Activated CD4-positive, alpha-beta memory T cell treated with anti-CD3 and anti-CD28 coated beads for 36 hours (primary cell): ENCODE measurements at regions of chr13 and their contacts with region 1.

Region 1: GRCh38 chr13:78137404-78138142 is 218.9 kb upstream of the EDNRB start:
- DNase-seq: peak; percentile 12
- H3K4me3 Mint-ChIP-seq: no peak overlapping the region
- H3K27ac Mint-ChIP-seq: no peak overlapping the region
- H3K4me1 Mint-ChIP-seq: peaks cover 3% of the 10 kb centered on the region
- H3K27me3 Mint-ChIP-seq: no peaks in the 10 kb centered on the region

Region 2: DNA sequence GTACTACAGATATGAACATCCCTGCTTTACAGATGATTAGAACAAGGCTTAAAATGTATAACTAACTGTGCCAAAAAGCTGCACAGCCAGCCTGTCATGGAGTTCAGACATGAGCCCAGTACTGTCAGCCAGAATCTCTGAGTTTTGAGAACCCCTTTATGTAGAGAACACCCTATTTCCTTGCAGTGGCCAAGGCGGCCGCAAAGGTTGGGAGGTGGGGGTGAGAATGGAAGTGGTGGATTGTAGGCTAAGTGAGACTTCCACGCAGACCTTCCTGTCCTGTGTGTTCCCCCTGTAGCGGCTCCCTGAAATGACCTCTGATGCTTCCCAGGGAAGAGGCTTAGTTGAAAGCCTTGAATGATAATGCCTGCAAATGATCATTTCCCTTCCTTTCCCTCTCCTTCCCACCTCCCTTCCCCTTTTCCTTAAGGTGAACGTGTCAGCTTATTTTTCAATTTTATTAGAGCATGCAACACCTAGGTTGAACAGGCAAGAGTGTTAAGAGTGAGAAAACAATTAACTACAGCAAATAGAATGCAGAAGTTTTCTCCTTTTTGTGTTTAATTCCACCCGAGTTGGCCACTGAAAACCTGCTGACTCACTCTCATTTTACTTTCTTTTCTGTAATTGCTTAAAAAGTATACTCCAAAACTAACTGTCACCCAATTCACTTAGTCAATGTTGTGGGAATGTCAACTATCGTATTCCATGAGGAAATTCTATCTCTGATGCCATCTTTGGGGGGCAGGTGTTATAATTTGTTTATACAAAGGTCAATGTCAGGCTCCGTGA is 51.9 kb before region 1 on chr13:
- CTCF ChIA-PET with region 1: no interaction called
- POLR2A ChIA-PET with region 1: no interaction called
- intact Hi-C with region 1: no loop called
- DNase-seq: no peak
- H3K4me3 Mint-ChIP-seq: no peak overlapping the region
- H3K27ac Mint-ChIP-seq: no peak overlapping the region
- H3K4me1 Mint-ChIP-seq: no peaks in the 10 kb centered on the region
- H3K27me3 Mint-ChIP-seq: peaks cover 9% of the 10 kb centered on the region

Region 3: GRCh38 chr13:78147905-78148304 is 10.3 kb after region 1 on chr13:
- CTCF ChIA-PET with region 1: interaction called, 16 read pairs
- POLR2A ChIA-PET with region 1: no interaction called
- intact Hi-C with region 1: no loop called
- DNase-seq: no peak
- H3K4me3 Mint-ChIP-seq: no peak overlapping the region
- H3K27ac Mint-ChIP-seq: no peak overlapping the region
- H3K4me1 Mint-ChIP-seq: no peaks in the 10 kb centered on the region
- H3K27me3 Mint-ChIP-seq: peaks cover 2% of the 10 kb centered on the region

Region 4: DNA sequence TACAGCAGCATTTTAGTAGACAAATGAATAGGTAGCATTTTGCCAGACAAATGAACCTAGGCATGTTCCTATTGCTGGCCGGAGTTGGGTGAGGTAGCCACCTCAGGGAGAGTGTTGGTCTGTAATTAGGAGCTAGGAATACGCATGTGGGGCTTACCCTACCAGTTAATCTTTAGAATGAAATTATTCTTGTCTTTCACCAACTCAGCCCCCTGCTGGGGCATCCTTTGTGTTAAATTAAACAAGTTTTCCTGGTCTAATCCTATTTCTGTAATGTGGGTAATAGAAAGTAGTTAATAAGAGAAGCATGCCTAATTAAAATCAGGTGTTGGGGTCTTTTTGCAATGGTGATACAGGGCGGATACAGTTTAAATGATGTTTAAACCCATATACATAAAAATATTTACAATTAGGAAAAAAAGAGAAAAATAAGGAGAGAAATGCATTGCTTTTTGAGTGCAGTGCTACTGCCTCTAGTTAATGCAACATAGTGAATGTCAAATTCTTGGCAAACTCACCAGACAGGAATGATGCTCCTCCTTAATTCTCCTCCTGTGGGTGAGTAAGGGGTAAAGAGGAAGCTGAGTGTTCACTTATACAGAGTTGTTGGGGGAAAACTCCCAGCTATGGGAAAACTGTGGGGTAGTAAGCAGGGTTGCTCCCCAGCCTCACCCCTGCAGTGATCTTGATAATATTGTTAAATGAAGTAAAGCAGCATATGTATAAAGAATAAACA is 57.5 kb after region 1 on chr13:
- CTCF ChIA-PET with region 1: no interaction called
- POLR2A ChIA-PET with region 1: no interaction called
- intact Hi-C with region 1: no loop called
- DNase-seq: no peak
- H3K4me3 Mint-ChIP-seq: no peak overlapping the region
- H3K27ac Mint-ChIP-seq: no peak overlapping the region
- H3K4me1 Mint-ChIP-seq: no peaks in the 10 kb centered on the region
- H3K27me3 Mint-ChIP-seq: peaks cover 2% of the 10 kb centered on the region

Region 5: GRCh38 chr13:78609464-78610205 is 472.1 kb after region 1 on chr13:
- CTCF ChIA-PET with region 1: no interaction called
- POLR2A ChIA-PET with region 1: no interaction called
- intact Hi-C with region 1: loop called (anchors 5 kb)
- DNase-seq: no peak
- H3K4me3 Mint-ChIP-seq: peak overlapping the region; percentile 53
- H3K27ac Mint-ChIP-seq: no peak overlapping the region
- H3K4me1 Mint-ChIP-seq: peaks cover 30% of the 10 kb centered on the region
- H3K27me3 Mint-ChIP-seq: peaks cover 55% of the 10 kb centered on the region

Region 6: DNA sequence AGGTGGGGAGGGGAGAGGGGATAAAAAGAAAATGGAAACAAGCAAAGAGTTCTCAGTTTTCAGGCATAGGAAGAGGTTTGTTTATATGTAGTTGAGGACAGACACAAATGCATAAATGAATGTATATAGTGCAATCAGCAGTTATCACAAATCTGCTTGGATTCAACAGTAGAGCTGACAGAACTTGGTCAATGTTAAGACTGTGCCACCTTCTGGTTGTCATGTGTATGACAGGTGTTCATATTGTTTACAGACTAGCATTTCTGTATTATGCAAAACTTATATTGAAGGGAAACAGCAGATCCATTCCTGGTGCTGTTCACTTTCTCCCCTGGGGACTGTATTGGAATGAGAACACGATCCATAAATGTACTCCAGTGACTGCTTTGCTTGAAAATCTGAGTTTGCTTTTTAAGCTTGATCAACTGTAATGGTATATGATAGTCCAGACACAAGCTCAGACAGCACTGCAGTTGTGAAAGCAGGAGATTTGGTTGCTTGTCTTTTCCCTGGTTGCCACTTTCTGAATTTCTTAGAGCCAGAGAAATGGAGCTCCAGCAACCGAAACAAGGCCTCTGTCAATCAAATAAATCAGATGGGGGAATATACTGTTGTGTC is 840.9 kb after region 1 on chr13:
- CTCF ChIA-PET with region 1: interaction called, 66 read pairs
- POLR2A ChIA-PET with region 1: no interaction called
- intact Hi-C with region 1: loop called (anchors 1 kb)
- DNase-seq: no peak
- H3K4me3 Mint-ChIP-seq: no peak overlapping the region
- H3K27ac Mint-ChIP-seq: no peak overlapping the region
- H3K4me1 Mint-ChIP-seq: no peaks in the 10 kb centered on the region
- H3K27me3 Mint-ChIP-seq: peaks cover 4% of the 10 kb centered on the region